ENCODE measurements at regions of chr17 and their contacts with region 1.

Region 1: GRCh38 chr17:40113110-40113906 is 8.5 kb upstream of the MSL1 start:
- DNase-seq: peak; percentile 83
- ATAC-seq: peak; percentile 91
- H3K4me3 ChIP-seq: peak overlapping the region; percentile 37; the same call in 1 of the 2 replicates
- H3K27ac ChIP-seq: peak overlapping the region; percentile 82
- H3K4me1 ChIP-seq: peaks cover 28% of the 10 kb centered on the region
- H3K27me3 ChIP-seq: no peaks in the 10 kb centered on the region
- CTCF ChIP-seq: peak; percentile 84 to 98 (median 91); a peak in 4 of 6 replicates
- EP300 ChIP-seq: no peak; a peak in 1 of 4 replicates
- POLR2A ChIP-seq: peak; percentile 65
- RAD21 ChIP-seq: peak; percentile 92

Region 2: DNA sequence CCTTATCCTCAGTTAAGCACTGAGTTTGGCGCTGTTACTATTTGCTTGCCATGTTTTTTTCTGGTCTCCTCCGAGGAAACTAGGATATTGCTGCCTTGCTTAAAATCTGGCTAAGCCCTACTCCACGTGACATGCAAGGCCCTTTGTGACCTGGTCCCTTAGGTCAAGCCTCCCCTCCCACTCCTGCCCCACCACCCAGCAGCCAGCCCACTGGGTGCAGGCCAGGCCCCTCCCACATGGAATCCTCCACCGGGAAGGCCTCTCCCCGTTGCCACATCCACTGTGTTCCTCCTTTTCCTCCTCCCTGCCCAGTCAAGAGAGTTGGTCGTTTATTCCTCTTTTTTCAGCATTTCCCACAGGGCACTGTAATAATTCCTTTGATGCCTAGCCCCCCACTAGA is 116.5 kb before region 1 on chr17:
- CTCF ChIA-PET with region 1: no interaction called
- POLR2A ChIA-PET with region 1: no interaction called
- RAD21 ChIA-PET with region 1: no interaction called
- SMC1A ChIA-PET with region 1: no interaction called
- in situ Hi-C with region 1: no loop called
- intact Hi-C with region 1: no loop called
- DNase-seq: no peak
- ATAC-seq: no peak
- H3K4me3 ChIP-seq: no peak overlapping the region
- H3K27ac ChIP-seq: no peak overlapping the region
- H3K4me1 ChIP-seq: no peaks in the 10 kb centered on the region
- H3K27me3 ChIP-seq: no peaks in the 10 kb centered on the region
- CTCF ChIP-seq: no peak
- EP300 ChIP-seq: no peak
- POLR2A ChIP-seq: 0 out of 2 replicates have a peak, but pooled peaks have one; percentile 17
- RAD21 ChIP-seq: no peak

Region 3: DNA sequence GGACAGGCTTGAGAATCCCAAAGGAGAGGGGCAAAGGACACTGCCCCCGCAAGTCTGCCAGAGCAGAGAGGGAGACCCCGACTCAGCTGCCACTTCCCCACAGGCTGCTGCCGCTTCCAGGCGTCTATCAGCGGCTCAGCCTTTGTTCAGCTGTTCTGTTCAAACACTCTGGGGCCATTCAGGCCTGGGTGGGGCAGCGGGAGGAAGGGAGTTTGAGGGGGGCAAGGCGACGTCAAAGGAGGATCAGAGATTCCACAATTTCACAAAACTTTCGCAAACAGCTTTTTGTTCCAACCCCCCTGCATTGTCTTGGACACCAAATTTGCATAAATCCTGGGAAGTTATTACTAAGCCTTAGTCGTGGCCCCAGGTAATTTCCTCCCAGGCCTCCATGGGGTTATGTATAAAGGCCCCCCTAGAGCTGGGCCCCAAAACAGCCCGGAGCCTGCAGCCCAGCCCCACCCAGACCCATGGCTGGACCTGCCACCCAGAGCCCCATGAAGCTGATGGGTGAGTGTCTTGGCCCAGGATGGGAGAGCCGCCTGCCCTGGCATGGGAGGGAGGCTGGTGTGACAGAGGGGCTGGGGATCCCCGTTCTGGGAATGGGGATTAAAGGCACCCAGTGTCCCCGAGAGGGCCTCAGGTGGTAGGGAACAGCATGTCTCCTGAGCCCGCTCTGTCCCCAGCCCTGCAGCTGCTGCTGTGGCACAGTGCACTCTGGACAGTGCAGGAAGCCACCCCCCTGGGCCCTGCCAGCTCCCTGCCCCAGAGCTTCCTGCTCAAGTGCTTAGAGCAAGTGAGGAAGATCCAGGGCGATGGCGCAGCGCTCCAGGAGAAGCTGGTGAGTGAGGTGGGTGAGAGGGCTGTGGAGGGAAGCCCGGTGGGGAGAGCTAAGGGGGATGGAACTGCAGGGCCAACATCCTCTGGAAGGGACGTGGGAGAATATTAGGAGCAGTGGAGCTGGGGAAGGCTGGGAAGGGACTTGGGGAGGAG is 98.0 kb before region 1 on chr17 and contains the start of gene CSF3:
- CTCF ChIA-PET with region 1: interaction called, 58 read pairs
- POLR2A ChIA-PET with region 1: interaction called, 4 read pairs
- RAD21 ChIA-PET with region 1: interaction called, 52 read pairs
- SMC1A ChIA-PET with region 1: interaction called, 50 read pairs
- in situ Hi-C with region 1: no loop called
- intact Hi-C with region 1: loop called (anchors 1 kb)
- DNase-seq: no peak
- ATAC-seq: 0 out of 3 replicates have a peak, but pooled peaks have one; percentile 16
- H3K4me3 ChIP-seq: no peak within 1 kb of the TSS
- H3K27ac ChIP-seq: no peak within 1 kb of the TSS
- H3K4me1 ChIP-seq: peaks cover 8% of the 10 kb centered on the region
- H3K27me3 ChIP-seq: no peaks in the 10 kb centered on the region
- CTCF ChIP-seq: no peak
- EP300 ChIP-seq: no peak
- POLR2A ChIP-seq: no peak
- RAD21 ChIP-seq: no peak
- polyA plus RNA-seq, gene CSF3: 0.09 TPM in 1 of 2 experiments, not detected in the other

Region 4: DNA sequence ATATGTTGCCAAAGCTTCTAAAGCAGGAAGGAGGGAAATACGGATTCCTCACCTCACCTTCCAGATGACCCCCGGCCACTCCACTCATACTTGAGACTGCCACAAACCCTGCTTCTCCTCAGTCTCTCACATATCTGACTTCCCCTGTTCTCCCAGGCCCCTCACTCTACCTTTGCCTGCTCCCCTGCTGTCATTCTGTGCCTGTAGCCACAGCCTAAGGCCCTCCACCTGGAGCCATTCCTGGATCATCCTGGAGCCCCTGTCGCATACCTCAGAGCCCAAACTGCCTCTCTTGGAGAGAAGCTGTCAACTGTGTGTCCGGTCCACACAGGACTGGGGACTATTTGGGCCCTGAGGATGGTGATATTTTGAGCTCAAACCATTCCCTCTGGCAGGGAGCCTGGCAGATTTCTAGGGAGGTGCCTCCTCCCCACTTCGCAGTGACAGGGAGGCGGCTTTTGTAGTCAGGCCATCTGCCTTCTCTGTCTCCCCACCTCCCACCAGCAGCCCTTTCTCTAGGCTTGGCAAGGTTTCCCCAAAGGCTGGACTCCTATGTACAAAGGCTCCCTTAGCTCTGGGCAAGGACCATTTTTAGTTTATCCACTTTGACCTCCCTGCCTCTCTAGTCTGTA is 56.8 kb before region 1 on chr17:
- CTCF ChIA-PET with region 1: interaction called, 120 read pairs
- POLR2A ChIA-PET with region 1: no interaction called
- RAD21 ChIA-PET with region 1: interaction called, 19 read pairs
- SMC1A ChIA-PET with region 1: interaction called, 7 read pairs
- in situ Hi-C with region 1: no loop called
- intact Hi-C with region 1: no loop called
- DNase-seq: no peak
- ATAC-seq: no peak
- H3K4me3 ChIP-seq: no peak overlapping the region
- H3K27ac ChIP-seq: no peak overlapping the region
- H3K4me1 ChIP-seq: no peaks in the 10 kb centered on the region
- H3K27me3 ChIP-seq: no peaks in the 10 kb centered on the region; a peak in 2 of 4 replicates
- CTCF ChIP-seq: no peak
- EP300 ChIP-seq: no peak
- POLR2A ChIP-seq: no peak
- RAD21 ChIP-seq: no peak

Region 5: DNA sequence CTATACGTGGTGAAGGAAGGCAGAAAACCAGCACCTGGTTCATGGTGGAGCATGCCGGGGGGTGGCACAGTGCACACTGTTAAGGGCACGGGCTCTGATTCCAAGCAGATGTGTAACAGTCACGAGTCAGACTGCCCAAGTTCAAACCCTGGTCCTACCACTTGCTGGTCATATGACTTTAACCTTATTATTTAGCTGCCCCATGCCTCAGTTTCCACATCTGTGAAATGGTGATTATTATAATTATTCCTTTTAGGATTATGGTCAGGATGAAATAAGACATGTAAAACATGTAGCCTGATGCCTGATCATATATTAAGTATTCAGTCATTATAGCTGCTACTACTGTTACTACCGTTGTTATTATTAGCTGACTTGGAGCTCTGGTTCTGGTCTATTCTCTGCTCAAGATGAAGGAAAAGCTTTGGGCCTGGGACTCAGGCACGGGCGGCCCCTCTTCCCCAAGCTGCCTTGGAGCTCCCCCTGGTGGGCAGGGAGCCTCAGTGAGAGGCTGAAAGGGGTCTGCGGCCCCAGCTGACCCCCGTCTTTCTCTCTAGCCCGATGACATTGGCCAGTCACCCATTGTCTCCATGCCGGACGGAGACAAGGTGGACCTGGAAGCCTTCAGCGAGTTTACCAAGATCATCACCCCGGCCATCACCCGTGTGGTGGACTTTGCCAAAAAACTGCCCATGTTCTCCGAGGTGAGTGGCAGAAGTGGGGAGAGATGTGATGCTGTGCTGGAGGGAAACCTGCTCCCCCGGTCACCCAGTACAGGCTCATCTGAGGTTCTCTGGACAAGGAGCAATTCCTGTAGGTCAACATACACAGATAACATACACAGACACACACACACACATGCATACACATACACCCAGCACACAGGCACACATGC is 26.9 kb before region 1 on chr17:
- CTCF ChIA-PET with region 1: interaction called, 38 read pairs
- POLR2A ChIA-PET with region 1: no interaction called
- RAD21 ChIA-PET with region 1: interaction called, 21 read pairs
- SMC1A ChIA-PET with region 1: interaction called, 17 read pairs
- in situ Hi-C with region 1: no loop called
- intact Hi-C with region 1: no loop called
- DNase-seq: no peak
- ATAC-seq: peak; percentile 92
- H3K4me3 ChIP-seq: no peak overlapping the region
- H3K27ac ChIP-seq: no peak overlapping the region
- H3K4me1 ChIP-seq: no peaks in the 10 kb centered on the region
- H3K27me3 ChIP-seq: no peaks in the 10 kb centered on the region
- CTCF ChIP-seq: peak; percentile 79 to 89 (median 80)
- EP300 ChIP-seq: no peak
- POLR2A ChIP-seq: no peak
- RAD21 ChIP-seq: peak; percentile 78

Region 6: GRCh38 chr17:40168262-40168832 is 55.0 kb after region 1 on chr17:
- CTCF ChIA-PET with region 1: interaction called, 367 read pairs
- POLR2A ChIA-PET with region 1: interaction called, 52 read pairs
- RAD21 ChIA-PET with region 1: interaction called, 246 read pairs
- SMC1A ChIA-PET with region 1: interaction called, 177 read pairs
- in situ Hi-C with region 1: loop called (anchors 5 kb)
- intact Hi-C with region 1: loop called (anchors 1 kb)
- DNase-seq: peak; percentile 15
- ATAC-seq: peak; percentile 83
- H3K4me3 ChIP-seq: no peak overlapping the region
- H3K27ac ChIP-seq: no peak overlapping the region
- H3K4me1 ChIP-seq: no peaks in the 10 kb centered on the region
- H3K27me3 ChIP-seq: no peaks in the 10 kb centered on the region
- CTCF ChIP-seq: peak; percentile 69 to 78 (median 69)
- EP300 ChIP-seq: no peak
- POLR2A ChIP-seq: no peak
- RAD21 ChIP-seq: peak; percentile 80

Region 7: DNA sequence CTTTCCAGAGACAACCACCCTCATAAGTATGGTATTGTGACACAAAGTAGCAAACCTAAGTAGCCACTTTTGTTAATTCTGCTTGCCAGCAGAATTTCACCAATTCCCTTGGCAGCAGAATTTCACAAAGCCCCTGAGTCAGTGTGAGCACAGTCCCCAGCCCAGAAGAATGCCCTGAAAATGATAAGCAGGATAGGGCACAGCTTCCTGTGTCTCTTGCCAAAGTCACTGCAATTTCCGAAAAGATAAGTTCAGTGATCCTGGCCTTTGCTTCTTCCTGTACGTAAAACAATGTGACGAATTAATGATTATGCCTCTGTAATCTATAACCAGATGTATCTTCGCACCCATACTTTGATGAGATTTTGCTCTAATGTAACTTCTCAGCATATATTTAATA is 89.8 kb after region 1 on chr17:
- CTCF ChIA-PET with region 1: interaction called, 23 read pairs
- POLR2A ChIA-PET with region 1: interaction called, 3 read pairs
- RAD21 ChIA-PET with region 1: interaction called, 14 read pairs
- SMC1A ChIA-PET with region 1: interaction called, 9 read pairs
- in situ Hi-C with region 1: no loop called
- intact Hi-C with region 1: no loop called
- DNase-seq: no peak
- ATAC-seq: no peak
- H3K4me3 ChIP-seq: no peak overlapping the region
- H3K27ac ChIP-seq: no peak overlapping the region
- H3K4me1 ChIP-seq: no peaks in the 10 kb centered on the region
- H3K27me3 ChIP-seq: no peaks in the 10 kb centered on the region
- CTCF ChIP-seq: no peak
- EP300 ChIP-seq: no peak
- POLR2A ChIP-seq: no peak
- RAD21 ChIP-seq: no peak

Measured in GM12878 (cell line).